Endothelial cell of umbilical vein (primary cell): ENCODE measurements at regions of chr5 and their contacts with region 1.

Region 1: GRCh38 chr5:78504704-78505677 is 143.6 kb downstream of the LHFPL2 start:
- DNase-seq: peak; percentile 100
- H3K4me3 ChIP-seq: no peak overlapping the region
- H3K27ac ChIP-seq: peak overlapping the region; percentile 86
- H3K4me1 ChIP-seq: peaks cover 18% of the 10 kb centered on the region
- H3K27me3 ChIP-seq: no peaks in the 10 kb centered on the region
- CTCF ChIP-seq: no peak
- POLR2A ChIP-seq: no peak

Region 2: GRCh38 chr5:78377056-78377717 is 127.8 kb before region 1 on chr5:
- CTCF ChIA-PET with region 1: no interaction called
- POLR2A ChIA-PET with region 1: no interaction called
- dilution Hi-C with region 1: no loop called
- intact Hi-C with region 1: no loop called
- DNase-seq: peak; percentile 11
- H3K4me3 ChIP-seq: no peak overlapping the region
- H3K27ac ChIP-seq: no peak overlapping the region
- H3K4me1 ChIP-seq: no peaks in the 10 kb centered on the region
- H3K27me3 ChIP-seq: no peaks in the 10 kb centered on the region
- CTCF ChIP-seq: no peak
- POLR2A ChIP-seq: no peak

Region 3: GRCh38 chr5:78518365-78519197 is 13.6 kb after region 1 on chr5:
- CTCF ChIA-PET with region 1: interaction called, 7 read pairs
- POLR2A ChIA-PET with region 1: interaction called, 4 read pairs
- dilution Hi-C with region 1: no loop called
- intact Hi-C with region 1: loop called (anchors 1 kb)
- DNase-seq: peak; percentile 92
- H3K4me3 ChIP-seq: no peak overlapping the region
- H3K27ac ChIP-seq: peak overlapping the region; percentile 91
- H3K4me1 ChIP-seq: peaks cover 45% of the 10 kb centered on the region
- H3K27me3 ChIP-seq: no peaks in the 10 kb centered on the region
- CTCF ChIP-seq: no peak
- POLR2A ChIP-seq: no peak